Activated T-helper 1 cell treated with anti-CD3 and anti-CD28 coated beads, Interleukin-12 subunit alpha, Interleukin-12 subunit beta, Interleukin-2, Interleukin-4 antibody, amounts not matched to agents 30 ng/mL and 10 ng/mL and 1 ng/mL, durations not matched to agents 14 hours and 24 hours and 36 hours (primary cell): ENCODE measurements at regions of chr9 and their contacts with region 1.

Region 1: DNA sequence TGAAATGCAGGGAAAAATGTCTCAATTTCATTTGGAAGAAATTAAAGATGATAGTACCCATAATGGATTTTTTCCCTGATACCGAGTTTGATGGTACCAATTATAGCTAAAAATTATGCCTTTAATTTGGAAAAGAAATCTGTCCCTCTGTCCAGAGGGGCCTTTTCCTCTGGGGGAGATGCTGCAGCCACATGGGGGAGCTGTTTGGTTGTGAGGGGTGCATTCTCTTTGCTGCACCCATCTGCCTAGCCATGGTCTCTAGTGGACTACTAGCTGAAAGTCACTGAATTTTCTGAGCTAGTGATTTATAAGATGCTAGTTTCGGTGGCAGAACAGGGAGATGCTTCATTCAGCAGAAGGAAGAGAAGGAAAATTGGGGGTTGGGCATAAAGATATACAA is 9.6 kb downstream of the SEC61B start:
- DNase-seq: no peak
- H3K4me3 Mint-ChIP-seq: no peak overlapping the region
- H3K27ac Mint-ChIP-seq: no peak overlapping the region
- H3K4me1 Mint-ChIP-seq: peaks cover 51% of the 10 kb centered on the region
- H3K27me3 Mint-ChIP-seq: no peaks in the 10 kb centered on the region

Region 2: GRCh38 chr9:99244344-99245260 is 12.9 kb after region 1 on chr9:
- intact Hi-C with region 1: loop called (anchors 1 kb)
- DNase-seq: no peak
- H3K4me3 Mint-ChIP-seq: no peak overlapping the region
- H3K27ac Mint-ChIP-seq: peak overlapping the region; percentile 57
- H3K4me1 Mint-ChIP-seq: peaks cover 31% of the 10 kb centered on the region
- H3K27me3 Mint-ChIP-seq: no peaks in the 10 kb centered on the region

Region 3: DNA sequence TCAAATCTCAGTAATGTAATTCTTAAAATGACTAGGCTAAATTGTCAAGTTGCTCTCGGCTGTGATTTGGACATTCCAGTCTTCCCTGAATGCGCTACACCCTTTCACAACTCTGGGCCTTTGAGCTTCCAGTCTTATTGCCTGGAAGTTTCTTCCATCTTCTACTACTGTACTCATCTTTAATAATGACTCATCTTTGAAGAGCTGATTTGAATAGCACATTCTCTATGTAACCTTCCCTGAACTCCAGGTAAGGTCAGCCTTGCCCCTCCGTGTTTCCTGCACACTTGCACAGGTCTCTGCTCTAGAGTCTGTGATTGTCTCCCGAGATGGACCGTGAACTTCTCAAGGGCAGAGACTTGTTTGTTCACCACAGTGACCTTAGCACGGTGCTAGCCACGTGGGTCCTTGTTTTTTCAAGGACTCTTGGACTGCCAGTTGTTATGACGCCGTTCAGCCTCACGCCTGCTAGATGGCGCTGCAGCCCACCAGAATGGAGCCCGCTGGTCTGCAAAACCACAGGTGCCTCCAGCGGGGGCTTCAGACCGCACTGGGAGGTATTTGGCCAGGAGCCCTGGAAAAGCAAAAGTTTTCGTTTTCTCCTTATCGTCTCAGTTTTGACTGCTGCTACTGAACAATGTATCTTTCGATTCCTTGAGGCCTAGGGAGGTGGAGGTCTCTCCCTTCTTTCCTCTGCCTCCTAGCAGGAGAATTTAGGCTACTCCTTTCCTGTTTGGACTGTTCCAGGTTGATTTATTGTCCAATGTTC is 34.7 kb after region 1 on chr9:
- intact Hi-C with region 1: loop called (anchors 2 kb)
- DNase-seq: peak; percentile 50
- H3K4me3 Mint-ChIP-seq: peak overlapping the region; percentile 3
- H3K27ac Mint-ChIP-seq: no peak overlapping the region
- H3K4me1 Mint-ChIP-seq: peaks cover 14% of the 10 kb centered on the region
- H3K27me3 Mint-ChIP-seq: peaks cover 14% of the 10 kb centered on the region